KBM-7 (cell line): ENCODE measurements at regions of chr1 and their contacts with region 1.

Region 1: DNA sequence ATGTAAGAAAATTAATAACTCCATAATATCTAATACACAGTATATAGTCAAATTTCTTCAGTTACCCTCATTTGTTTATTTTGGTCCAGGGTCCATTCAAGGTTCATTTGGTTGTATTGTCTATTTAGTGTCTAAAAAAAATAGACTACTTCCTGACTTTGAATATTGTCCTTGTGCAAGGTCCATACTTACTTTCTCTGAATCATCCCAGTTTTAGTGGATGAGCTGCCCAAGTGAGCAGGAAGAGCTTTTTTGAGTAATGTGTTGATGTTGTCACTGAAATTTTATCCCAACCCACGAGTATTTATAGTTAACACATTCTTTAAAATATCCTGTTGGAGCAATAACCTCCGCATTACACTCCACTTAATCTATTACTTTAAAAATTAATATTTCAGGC is 45.6 kb upstream of the FASLG start:
- DNase-seq: no peak

Region 2: GRCh38 chr1:172719694-172720138 is 106.4 kb after region 1 on chr1:
- in situ Hi-C with region 1: loop called (anchors 10 kb)
- DNase-seq: peak; percentile 57